Activated CD8-positive, alpha-beta T cell treated with anti-CD3 and anti-CD28 coated beads for 36 hours (primary cell): ENCODE measurements at regions of chr2 and their contacts with region 1.

Region 1: GRCh38 chr2:168246483-168247340 is 683 bp downstream of the STK39 start:
- DNase-seq: peak; percentile 86
- ATAC-seq: peak; percentile 43
- H3K4me3 Mint-ChIP-seq: peak overlapping the region; percentile 93
- H3K27ac Mint-ChIP-seq: peak overlapping the region; percentile 94
- H3K4me1 Mint-ChIP-seq: peaks cover 35% of the 10 kb centered on the region
- H3K27me3 Mint-ChIP-seq: no peaks in the 10 kb centered on the region
- CTCF ChIP-seq: no peak

Region 2: GRCh38 chr2:168149150-168149974 is 97.3 kb before region 1 on chr2:
- CTCF ChIA-PET with region 1: no interaction called
- POLR2A ChIA-PET with region 1: no interaction called
- intact Hi-C with region 1: no loop called
- DNase-seq: no peak
- ATAC-seq: no peak
- H3K4me3 Mint-ChIP-seq: no peak overlapping the region
- H3K27ac Mint-ChIP-seq: no peak overlapping the region
- H3K4me1 Mint-ChIP-seq: peaks cover 5% of the 10 kb centered on the region
- H3K27me3 Mint-ChIP-seq: no peaks in the 10 kb centered on the region
- CTCF ChIP-seq: no peak

Region 3: DNA sequence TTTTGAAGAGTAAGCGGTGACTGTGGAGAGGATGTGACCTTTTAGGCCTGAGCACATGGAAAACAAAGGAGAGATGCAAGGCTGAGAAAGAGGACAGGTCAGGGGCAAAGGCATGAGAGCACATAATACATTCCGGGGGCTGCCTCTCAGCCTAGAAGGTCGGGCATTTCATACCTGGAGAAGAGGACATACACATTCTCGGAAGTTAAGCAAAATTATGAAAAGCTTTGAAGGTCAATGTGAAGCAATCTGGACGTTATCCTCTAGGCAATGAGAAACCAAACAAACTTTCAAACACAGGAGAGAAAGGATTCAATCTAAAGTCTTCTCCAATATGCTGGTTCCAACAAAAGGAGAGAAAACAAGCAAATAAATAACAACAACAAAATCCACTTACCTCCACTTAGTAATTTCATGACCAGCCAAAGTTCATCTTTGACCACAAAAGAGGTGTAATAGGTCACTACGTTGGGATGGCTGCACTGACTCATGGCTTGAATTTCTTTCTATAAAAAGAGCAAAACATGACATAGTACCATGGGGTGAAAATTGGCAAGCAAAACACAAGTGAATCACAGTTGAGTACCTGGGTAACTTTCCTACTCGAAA is 79.7 kb before region 1 on chr2:
- CTCF ChIA-PET with region 1: interaction called, 4 read pairs
- POLR2A ChIA-PET with region 1: no interaction called
- intact Hi-C with region 1: loop called (anchors 5 kb)
- DNase-seq: peak; percentile 64
- ATAC-seq: peak; percentile 87
- H3K4me3 Mint-ChIP-seq: no peak overlapping the region
- H3K27ac Mint-ChIP-seq: peak overlapping the region; percentile 78
- H3K4me1 Mint-ChIP-seq: peaks cover 63% of the 10 kb centered on the region
- H3K27me3 Mint-ChIP-seq: no peaks in the 10 kb centered on the region
- CTCF ChIP-seq: no peak

Region 4: DNA sequence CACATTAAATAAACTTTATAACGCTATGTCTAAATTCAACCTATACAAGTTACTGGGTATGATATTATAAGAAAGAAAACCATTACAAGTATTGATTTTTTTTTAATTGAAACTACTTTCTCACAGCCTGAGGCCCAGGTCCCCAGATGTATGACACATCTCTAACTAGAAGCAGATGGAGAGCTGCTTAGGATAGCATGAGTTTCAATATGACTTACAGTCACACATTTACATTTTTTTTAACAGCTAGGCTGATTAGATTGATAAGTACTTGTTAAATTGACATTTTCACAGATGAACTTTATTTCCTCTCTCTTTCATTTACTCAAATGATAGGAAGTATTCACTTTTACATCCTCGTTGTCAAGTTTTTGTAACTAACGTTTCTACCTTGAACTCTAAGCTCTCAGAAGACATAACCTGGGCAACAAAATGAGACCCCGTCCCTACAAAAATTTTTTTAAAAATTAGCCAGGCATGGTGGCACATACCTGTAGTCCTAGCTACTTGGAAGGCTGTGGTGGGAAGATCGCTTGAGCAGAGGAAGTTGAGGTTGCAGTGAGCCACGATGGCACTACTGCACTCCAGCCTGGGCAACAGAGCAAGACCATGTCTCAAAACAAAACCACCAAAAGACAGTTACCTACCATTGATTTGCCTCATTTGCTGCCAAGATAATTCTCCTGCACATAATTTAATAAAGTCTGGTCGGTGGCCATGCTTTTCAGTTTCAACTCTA is 51.8 kb before region 1 on chr2:
- CTCF ChIA-PET with region 1: interaction called, 4 read pairs
- POLR2A ChIA-PET with region 1: interaction called, 9 read pairs
- intact Hi-C with region 1: loop called (anchors 2 kb)
- DNase-seq: peak; percentile 63
- ATAC-seq: peak; percentile 81
- H3K4me3 Mint-ChIP-seq: peak overlapping the region; percentile 69
- H3K27ac Mint-ChIP-seq: peak overlapping the region; percentile 98
- H3K4me1 Mint-ChIP-seq: peaks cover 71% of the 10 kb centered on the region
- H3K27me3 Mint-ChIP-seq: no peaks in the 10 kb centered on the region
- CTCF ChIP-seq: no peak

Region 5: DNA sequence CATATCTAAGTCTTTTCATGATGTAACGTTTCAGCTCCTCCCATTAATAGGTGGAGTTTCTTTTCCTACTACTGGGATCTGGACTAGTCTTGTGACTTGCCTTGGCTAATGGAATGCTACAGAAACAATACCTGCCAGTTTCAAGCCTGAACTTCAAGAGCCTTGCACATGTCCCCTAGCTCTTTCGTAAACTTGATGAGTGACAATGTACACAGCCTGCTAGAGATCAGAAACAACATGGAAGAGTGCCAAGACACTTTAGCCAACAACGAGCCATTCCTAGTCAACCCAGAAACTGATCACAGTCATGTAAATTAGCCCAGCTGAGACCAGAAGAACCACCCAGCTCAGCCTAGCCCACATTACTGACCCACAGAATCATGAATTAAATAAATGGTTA is 25.5 kb after region 1 on chr2:
- CTCF ChIA-PET with region 1: no interaction called
- POLR2A ChIA-PET with region 1: no interaction called
- intact Hi-C with region 1: no loop called
- DNase-seq: no peak
- ATAC-seq: no peak
- H3K4me3 Mint-ChIP-seq: no peak overlapping the region
- H3K27ac Mint-ChIP-seq: no peak overlapping the region
- H3K4me1 Mint-ChIP-seq: no peaks in the 10 kb centered on the region
- H3K27me3 Mint-ChIP-seq: peaks cover 1% of the 10 kb centered on the region
- CTCF ChIP-seq: no peak